Right ventricle myocardium superior (tissue), 1 donor: ENCODE measurements at regions of chr1 and their contacts with region 1.

Region 1: DNA sequence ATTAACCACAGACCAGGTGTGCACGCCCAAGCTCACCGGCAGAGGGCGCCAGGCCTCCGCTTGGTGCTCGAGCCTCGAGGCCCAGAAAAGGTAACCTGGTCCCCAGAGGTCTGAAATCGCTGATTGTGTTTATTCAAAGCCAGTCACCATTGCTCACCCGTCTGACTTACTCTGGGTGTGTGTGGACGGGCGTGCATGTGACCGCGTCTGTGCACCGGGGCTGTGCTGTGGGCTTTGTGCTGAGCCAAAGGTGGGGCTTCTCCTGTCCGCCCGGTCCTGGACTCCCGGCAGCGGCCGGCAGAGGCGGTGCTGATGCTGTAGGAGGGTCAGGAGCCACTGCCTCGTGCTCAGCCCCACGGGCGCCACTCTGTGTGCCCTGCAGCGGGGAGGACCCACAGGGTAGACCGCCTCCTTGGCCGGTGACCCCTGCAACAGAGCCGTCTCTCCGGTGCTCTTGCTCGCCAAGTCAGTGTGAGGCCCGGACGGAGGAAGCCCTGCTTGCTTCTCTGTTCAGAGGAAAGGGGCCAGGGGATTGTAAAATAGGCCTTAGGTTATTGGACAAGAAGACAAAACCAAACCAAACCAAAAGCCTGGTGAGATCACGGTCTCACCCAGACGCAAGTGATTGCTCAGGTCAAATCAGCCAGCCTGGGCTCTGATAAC is 32.0 kb upstream of the BTG2 start:
- DNase-seq: peak; percentile 93
- ATAC-seq: peak; percentile 76

Region 2: DNA sequence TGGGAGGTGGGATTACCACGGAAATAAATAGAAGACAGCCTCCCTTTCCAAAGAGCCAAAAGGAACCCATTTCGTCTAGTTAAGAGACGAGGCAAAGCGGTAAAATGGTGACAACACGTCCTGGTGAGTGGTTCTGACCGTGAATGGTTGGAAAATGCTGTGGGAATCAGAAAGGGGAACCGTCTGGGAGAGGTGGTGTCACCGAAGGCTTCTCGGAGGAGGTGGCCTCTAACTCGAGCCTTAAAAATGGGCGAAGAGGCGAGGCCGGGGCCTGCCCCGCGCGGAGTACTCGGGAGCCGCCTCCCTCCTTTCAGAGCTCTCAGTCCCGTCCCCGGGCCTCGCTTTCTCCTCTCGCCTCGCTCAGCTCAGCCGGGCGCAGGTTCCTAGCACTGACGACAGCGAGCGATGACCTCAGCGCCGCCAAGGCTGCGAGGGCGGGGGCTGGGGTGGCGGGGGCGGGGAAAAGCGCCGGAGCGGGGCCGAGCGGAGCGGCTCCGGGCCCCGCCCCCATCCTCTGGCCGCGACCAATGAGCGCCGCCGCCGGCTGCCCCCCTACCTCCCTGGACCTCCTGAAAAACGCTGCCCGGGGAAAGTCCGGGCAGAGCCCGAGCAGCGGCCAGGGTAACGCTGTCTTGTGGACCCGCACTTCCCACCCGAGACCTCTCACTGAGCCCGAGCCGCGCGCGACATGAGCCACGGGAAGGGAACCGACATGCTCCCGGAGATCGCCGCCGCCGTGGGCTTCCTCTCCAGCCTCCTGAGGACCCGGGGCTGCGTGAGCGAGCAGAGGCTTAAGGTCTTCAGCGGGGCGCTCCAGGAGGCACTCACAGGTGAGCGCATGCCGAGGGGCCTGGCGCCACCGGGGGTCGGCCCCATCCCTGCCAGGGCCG is 31.8 kb after region 1 on chr1 and contains the start of gene BTG2:
- intact Hi-C with region 1: loop called (anchors 1 kb)
- DNase-seq: peak; percentile 96
- ATAC-seq: peak; percentile 94
- total RNA-seq, gene BTG2: 40.5 TPM